Activated naive CD4-positive, alpha-beta T cell treated with anti-CD3 and anti-CD28 coated beads for 36 hours (primary cell): ENCODE measurements at regions of chr16 and their contacts with region 1.

Region 1: GRCh38 chr16:4957720-4958509 is at the start of gene SEC14L5:
- DNase-seq: peak; percentile 96
- H3K4me3 Mint-ChIP-seq: peak within 1 kb of the TSS; percentile 78
- H3K27ac Mint-ChIP-seq: no peak within 1 kb of the TSS
- H3K4me1 Mint-ChIP-seq: peaks cover 14% of the 10 kb centered on the region
- H3K27me3 Mint-ChIP-seq: peaks cover 30% of the 10 kb centered on the region
- total RNA-seq, gene SEC14L5: not detected

Region 2: DNA sequence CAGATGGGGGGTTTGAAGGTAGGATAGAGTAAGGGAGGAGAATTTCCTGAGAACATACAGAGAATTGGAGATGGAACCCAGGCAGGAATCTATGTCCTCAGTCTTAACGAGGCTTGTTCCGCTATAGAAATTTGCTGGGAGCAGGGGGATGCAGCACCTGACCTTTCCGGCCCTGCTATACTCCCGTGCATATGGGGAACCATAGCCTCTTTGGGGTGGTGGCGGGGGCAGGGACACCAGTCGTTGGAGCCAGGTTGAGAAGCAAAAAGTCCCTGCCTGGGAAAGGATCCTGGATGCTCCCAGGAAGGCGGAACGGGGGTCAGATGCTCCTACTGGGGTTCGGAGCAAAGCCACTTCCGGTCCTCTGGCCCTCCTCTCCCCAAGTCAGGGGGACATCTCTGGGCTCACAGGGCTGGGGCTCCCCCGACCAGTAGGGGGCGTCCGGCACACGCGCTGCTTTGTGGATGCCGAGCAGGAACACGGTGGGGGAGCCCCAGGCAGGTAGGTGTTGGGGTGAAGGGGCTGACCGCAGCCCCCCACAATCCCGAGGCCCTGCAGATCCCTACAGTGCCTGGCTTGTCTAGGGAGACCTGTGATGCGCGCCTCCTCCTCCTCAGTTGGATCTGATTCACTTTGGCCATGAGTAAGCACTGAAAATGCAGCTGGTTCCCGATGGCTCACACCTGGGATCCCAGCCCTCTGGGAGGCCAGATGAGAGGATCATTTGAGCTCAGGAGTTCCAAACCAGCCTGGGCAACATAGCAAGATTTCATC is 669.6 kb before region 1 on chr16:
- CTCF ChIA-PET with region 1: no interaction called
- intact Hi-C with region 1: loop called (anchors 1 kb)
- DNase-seq: peak; percentile 84
- H3K4me3 Mint-ChIP-seq: no peak overlapping the region
- H3K27ac Mint-ChIP-seq: no peak overlapping the region
- H3K4me1 Mint-ChIP-seq: peaks cover 9% of the 10 kb centered on the region
- H3K27me3 Mint-ChIP-seq: peaks cover 9% of the 10 kb centered on the region

Region 3: DNA sequence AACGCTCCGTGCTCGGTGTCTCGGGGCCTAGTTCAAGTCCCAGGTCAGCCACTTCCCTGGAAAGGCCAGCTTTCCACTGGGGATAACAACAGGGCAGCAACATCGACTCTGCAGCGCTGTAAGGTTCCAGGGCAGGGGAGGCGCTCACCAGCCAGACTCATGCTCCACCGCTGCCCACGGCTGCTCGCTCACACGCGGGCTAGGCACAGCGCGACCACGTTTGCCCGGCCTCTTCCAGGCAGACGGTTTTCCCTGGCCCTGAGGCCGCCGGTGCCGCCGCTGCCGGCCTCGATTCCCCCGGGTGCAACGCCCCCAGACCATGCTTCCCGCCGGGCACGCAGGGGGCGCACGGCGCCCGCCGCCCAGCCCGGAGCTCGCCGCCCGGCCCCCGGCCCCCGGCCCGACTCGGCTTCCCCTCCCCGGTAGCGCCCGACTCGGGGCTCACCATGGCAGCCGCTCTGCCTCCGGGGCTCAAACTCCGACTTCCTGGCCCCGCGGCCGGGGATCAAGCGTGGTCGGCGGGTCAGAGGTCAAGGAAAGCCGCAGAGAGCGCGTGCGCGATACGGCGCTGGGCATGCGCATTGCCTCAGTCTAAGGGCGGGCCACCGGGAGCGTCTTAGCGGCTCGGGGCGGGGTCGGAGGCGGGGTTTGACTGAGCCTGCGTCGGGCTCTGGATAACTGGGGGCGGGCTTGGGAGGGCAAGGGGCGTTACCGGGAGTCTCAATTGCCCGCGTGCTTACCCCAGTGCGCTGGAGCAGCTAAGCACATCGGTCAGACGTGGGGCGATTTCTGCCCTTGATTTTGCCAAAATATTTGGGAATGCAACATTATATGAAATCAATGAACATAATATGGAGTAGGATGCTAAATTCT is 606.9 kb before region 1 on chr16 and contains the start of gene PAM16:
- CTCF ChIA-PET with region 1: no interaction called
- intact Hi-C with region 1: loop called (anchors 5 kb)
- DNase-seq: peak; percentile 98
- H3K4me3 Mint-ChIP-seq: peak within 1 kb of the TSS; percentile 98
- H3K27ac Mint-ChIP-seq: peak within 1 kb of the TSS; percentile 84
- H3K4me1 Mint-ChIP-seq: peaks cover 40% of the 10 kb centered on the region
- H3K27me3 Mint-ChIP-seq: no peaks in the 10 kb centered on the region
- total RNA-seq, gene PAM16: 67.8 to 71.3 TPM

Region 4: GRCh38 chr16:4693296-4693955 is 264.5 kb before region 1 on chr16 and contains the start of gene NUDT16L1:
- CTCF ChIA-PET with region 1: no interaction called
- intact Hi-C with region 1: loop called (anchors 5 kb)
- DNase-seq: peak; percentile 96
- H3K4me3 Mint-ChIP-seq: peak within 1 kb of the TSS; percentile 83
- H3K27ac Mint-ChIP-seq: peak within 1 kb of the TSS; percentile 65
- H3K4me1 Mint-ChIP-seq: peaks cover 14% of the 10 kb centered on the region
- H3K27me3 Mint-ChIP-seq: no peaks in the 10 kb centered on the region
- total RNA-seq, gene NUDT16L1: 20.0 to 20.7 TPM

Region 5: DNA sequence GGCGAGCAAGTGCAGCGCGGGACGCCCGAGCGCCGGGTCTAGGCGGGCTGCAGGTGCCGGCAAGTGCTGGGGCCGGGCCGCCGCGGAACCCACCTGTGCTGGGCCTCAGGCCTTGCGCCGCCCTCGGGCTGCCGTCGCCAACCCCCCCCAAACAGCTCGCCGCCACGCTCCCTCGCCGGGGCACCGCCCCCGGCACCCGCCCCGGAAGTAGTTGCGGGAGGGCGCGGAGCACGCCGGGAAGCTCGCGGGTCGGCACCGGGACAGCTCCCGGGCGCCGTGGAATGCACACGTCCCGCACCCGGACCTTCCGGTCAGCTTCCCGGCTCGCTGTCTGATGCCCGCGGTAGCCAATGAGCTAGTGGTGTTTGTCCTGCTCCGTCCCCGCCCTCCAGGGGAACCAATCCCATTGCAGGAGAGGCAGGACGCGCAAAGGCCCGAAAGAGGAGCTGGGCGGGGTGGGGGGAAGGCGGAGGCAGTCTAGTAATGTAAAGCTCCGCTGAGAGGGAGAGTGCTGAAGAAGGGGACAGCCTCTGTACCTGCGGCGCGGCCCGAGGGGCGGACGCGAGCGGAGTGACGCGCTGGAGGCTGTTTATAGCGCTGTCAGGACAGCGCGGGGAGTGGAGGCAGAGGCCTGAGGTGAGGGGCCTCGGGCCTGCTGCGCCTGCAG is 223.7 kb before region 1 on chr16 and contains the starts of genes ANKS3 and DNAAF8:
- CTCF ChIA-PET with region 1: interaction called, 4 read pairs
- intact Hi-C with region 1: loop called (anchors 1 kb)
- DNase-seq: peak; percentile 75
- H3K4me3 Mint-ChIP-seq: peak within 1 kb of the TSS; percentile 87
- H3K27ac Mint-ChIP-seq: peak within 1 kb of the TSS; percentile 46
- H3K4me1 Mint-ChIP-seq: peaks cover 16% of the 10 kb centered on the region
- H3K27me3 Mint-ChIP-seq: no peaks in the 10 kb centered on the region
- total RNA-seq, gene ANKS3: 8.2 to 11.7 TPM
- total RNA-seq, gene DNAAF8: 0.07 TPM in 1 of 2 experiments, not detected in the other

Region 6: DNA sequence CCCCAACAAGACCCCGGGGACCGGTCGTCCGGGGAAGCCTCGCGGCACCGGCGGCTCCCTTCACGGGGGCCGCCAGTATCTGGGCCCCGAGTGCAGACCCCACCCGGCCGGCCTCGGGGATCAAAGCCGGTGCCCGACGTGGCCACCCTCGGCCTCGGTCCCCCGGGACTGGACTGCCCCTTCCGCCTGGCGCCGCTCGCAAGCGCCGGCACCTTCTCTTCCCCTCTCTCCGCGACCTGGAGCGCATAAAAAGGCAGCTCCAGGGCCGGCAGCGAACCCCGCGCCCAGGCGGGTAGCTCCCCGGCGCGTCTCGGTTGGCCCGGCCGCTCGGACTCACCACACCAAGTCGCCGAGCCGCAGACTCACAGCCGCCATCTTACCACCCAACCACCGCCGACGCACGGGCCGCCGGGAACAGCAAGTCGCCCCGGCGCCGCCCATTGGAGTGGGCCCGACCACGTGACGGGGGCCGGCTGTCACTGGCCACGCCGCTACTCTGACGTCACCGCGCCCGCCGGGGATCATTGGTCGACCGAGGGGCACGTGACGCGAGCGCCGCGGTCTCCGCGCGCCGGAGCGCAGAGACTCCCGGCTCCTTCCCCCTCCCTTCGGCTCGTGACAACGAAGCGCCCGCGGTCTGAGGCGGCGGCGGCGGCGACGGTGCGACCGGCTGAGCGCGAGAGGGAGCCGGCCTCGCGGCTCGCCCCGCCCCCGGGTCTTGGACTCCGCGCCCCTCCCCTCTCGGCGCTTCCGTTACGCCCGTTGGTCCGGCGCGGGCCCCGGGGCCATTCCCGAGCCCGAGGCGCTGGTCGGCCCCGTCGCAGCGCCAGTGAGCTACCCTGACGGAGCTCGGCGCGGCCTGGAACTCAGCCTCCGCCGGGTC is 110.8 kb before region 1 on chr16 and contains the starts of genes GLYR1 and UBN1:
- CTCF ChIA-PET with region 1: no interaction called
- intact Hi-C with region 1: loop called (anchors 1 kb)
- DNase-seq: peak; percentile 100
- H3K4me3 Mint-ChIP-seq: peak within 1 kb of the TSS; percentile 83
- H3K27ac Mint-ChIP-seq: peak within 1 kb of the TSS; percentile 80
- H3K4me1 Mint-ChIP-seq: peaks cover 54% of the 10 kb centered on the region
- H3K27me3 Mint-ChIP-seq: no peaks in the 10 kb centered on the region
- total RNA-seq, gene GLYR1: 62.2 to 65.0 TPM
- total RNA-seq, gene UBN1: 26.7 to 28.1 TPM

Region 7: GRCh38 chr16:5166486-5166885 is 208.6 kb after region 1 on chr16:
- CTCF ChIA-PET with region 1: no interaction called
- intact Hi-C with region 1: no loop called
- DNase-seq: no peak
- H3K4me3 Mint-ChIP-seq: no peak overlapping the region
- H3K27ac Mint-ChIP-seq: no peak overlapping the region
- H3K4me1 Mint-ChIP-seq: no peaks in the 10 kb centered on the region
- H3K27me3 Mint-ChIP-seq: peaks cover 25% of the 10 kb centered on the region